ENCODE measurements at regions of chr2 and their contacts with region 1.

Region 1: DNA sequence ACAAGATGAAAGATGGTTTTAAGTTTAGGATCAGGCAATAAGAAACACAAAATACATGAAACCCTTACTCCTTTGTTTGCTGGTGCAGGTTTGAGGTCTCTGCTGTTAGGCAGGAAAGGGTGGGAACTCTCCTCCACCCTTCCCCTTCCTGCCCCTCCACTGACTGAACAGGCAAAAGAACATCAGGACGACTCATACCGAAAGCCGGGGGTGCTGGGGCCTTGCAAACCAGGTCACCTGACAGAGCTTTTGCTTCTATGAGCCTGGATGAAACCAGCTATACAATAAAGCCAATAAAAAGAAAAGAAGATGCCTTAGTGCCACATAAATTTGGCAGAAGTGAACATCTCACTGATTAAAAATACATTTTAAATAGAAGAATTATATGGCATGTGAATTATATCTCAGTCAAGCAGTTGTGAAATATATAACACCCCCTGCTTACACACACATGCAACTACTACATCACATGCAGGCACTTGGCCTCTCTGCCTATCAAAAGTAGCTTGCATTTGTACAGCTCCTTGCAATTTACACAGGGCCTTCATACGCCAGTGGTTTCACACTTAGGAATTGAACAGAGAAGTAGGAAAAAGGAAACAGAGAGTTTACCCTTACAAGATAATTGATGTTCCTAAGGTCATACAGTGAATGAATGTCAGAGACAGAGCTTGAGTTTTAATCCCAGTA is 215.1 kb upstream of the TRIB2 start:
- DNase-seq: peak; percentile 91
- ATAC-seq: peak; percentile 95
- H3K4me3 Mint-ChIP-seq: peak overlapping the region; percentile 54
- H3K27ac Mint-ChIP-seq: peak overlapping the region; percentile 92
- H3K4me1 Mint-ChIP-seq: peaks cover 93% of the 10 kb centered on the region
- H3K27me3 Mint-ChIP-seq: no peaks in the 10 kb centered on the region

Region 2: GRCh38 chr2:12469141-12469561 is 32.5 kb before region 1 on chr2:
- CTCF ChIA-PET with region 1: no interaction called
- POLR2A ChIA-PET with region 1: no interaction called
- DNase-seq: no peak
- ATAC-seq: no peak
- H3K4me3 Mint-ChIP-seq: no peak overlapping the region
- H3K27ac Mint-ChIP-seq: no peak overlapping the region
- H3K4me1 Mint-ChIP-seq: peaks cover 4% of the 10 kb centered on the region
- H3K27me3 Mint-ChIP-seq: no peaks in the 10 kb centered on the region

Region 3: DNA sequence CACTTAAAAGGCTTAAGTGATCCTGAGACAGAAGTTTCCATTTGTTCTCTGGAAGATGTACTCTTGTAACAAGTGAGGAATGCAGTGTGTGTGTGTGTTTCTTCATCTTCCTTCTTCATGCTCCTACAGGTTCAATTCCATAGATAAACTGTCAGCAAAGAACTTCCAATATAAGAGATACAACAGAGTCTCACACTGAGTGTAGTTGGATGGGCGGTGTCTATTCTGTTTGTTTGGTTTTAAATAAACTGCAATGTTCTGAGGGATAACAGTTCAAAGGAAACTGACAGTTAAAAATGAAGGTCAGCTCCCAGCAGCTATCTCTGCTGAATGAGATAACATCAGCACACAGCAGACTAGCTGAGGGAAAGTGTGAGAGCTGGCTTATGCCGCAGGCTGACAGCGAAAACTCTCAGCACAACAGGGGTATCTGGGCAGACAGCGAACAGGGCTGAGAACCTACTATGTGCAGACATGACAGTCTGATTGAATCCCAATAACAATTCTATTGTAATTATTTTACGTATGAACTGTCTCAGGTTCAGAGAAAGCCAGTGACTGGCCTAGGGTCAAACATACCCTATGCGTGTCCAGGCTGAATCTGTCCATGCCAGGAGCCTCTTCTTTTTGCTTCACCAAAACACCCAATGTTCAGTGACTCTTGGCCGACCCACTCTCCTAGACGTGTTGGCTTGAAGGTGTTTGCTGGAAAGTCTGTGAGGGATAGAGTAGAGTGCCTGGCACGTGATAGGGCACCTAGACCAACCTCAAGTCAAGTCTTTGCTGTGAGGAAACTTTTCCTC is 13.2 kb after region 1 on chr2:
- CTCF ChIA-PET with region 1: interaction called, 16 read pairs
- POLR2A ChIA-PET with region 1: no interaction called
- DNase-seq: peak; percentile 62
- ATAC-seq: peak; percentile 88
- H3K4me3 Mint-ChIP-seq: no peak overlapping the region
- H3K27ac Mint-ChIP-seq: peak overlapping the region; percentile 71
- H3K4me1 Mint-ChIP-seq: peaks cover 35% of the 10 kb centered on the region
- H3K27me3 Mint-ChIP-seq: peaks cover 2% of the 10 kb centered on the region